ENCODE measurements at regions of chr4 and their contacts with region 1.

Region 1: GRCh38 chr4:74376888-74377483 is 12.0 kb downstream of the EREG start:
- DNase-seq: no peak
- ATAC-seq: peak; percentile 72 to 81

Region 2: GRCh38 chr4:74418063-74418670 is 41.2 kb after region 1 on chr4:
- intact Hi-C with region 1: no loop called
- DNase-seq: no peak
- ATAC-seq: peak in 1 of 2 donors; percentile 75

Region 3: DNA sequence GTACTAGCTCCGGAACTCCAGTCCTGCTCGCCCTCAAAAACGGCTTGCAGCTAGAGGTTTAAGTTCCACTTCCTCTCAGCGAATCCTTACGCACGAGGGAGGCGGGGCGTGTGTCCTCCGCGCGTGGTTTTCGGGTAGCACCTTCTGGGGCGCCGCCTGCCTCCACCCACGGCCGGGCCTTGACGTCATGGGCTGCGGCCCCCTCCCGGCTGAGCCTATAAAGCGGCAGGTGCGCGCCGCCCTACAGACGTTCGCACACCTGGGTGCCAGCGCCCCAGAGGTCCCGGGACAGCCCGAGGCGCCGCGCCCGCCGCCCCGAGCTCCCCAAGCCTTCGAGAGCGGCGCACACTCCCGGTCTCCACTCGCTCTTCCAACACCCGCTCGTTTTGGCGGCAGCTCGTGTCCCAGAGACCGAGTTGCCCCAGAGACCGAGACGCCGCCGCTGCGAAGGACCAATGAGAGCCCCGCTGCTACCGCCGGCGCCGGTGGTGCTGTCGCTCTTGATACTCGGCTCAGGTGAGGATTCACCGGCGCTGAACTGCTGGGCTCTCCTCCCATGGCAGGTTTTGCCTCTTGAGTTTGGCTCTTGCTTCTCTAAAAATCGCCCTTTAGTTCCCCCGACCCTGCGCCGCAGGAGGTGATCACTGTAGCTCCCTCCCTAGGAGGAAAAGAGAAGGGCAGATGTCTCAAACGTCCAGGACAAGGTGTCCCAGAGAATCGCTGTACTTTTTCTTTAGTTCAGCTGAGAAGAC is 68.1 kb after region 1 on chr4 and contains the start of gene AREG:
- intact Hi-C with region 1: loop called in 1 of 2 experiments (anchors 2 kb)
- DNase-seq: peak; percentile 89
- ATAC-seq: peak; percentile 93 to 96
- total RNA-seq, gene AREG: 4.6 to 22.8 TPM

Measured in left cardiac atrium (tissue), 4 donors.